Naive thymus-derived CD4-positive, alpha-beta T cell (primary cell): ENCODE measurements at regions of chr1 and their contacts with region 1.

Region 1: DNA sequence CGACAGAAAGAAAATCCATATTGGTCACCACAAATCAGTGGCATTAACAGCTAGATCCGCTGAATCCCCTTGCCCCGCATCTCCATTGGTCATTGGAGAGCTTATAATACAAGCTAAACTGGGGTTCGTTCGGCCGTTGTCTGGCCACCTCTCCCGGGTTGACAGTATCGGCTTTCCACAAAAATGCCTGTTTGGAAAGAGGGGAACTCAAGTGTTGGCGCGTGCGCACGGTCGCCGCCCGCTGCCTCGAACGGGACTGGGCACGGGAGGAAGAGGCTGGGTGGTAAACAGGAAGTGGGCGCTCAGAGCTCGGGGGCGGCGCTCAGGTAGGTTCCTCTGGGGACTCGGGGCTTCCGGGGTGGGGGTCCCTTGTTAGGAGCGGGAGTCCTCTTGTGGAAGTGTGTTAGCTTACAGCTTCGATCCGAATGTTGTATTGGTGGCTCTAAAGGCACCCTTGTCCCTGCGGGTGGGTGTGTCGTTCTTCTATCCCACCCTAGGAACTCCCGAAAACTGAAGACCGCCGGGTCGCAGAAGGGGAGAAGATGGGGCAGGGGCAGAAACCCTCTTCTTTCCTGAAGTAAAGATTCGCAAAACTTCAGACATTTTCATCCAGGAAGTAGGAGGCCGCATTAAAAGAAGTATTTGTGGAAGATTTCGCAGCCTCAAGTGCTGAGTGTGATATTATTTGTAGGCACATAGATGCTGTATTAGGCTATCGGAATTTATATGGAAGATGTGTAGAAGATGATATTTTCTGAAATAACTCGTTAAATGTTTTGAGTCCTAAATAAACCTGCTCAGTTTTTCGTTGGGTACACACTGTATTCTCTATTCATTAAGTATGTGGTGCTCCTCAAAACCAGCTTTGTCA is 962 bp downstream of the BROX start:
- DNase-seq: peak; percentile 76 to 95 (median 93)
- ATAC-seq: peak; percentile 80
- H3K4me3 ChIP-seq: peak overlapping the region; percentile 99
- H3K4me3 Mint-ChIP-seq: peak overlapping the region; percentile 92 to 100 (median 99)
- H3K27ac ChIP-seq: peak overlapping the region; percentile 100
- H3K27ac Mint-ChIP-seq: peak overlapping the region; percentile 97 to 100 (median 99)
- H3K4me1 ChIP-seq: peaks cover 11 to 21% of the 10 kb centered on the region in 2 donors
- H3K4me1 Mint-ChIP-seq: peaks cover 37 to 69% (median 60%) of the 10 kb centered on the region in 7 donors
- H3K27me3 ChIP-seq: no peaks in the 10 kb centered on the region
- H3K27me3 Mint-ChIP-seq: peaks cover 0 to 2% (median 0%) of the 10 kb centered on the region in 5 donors

Region 2: DNA sequence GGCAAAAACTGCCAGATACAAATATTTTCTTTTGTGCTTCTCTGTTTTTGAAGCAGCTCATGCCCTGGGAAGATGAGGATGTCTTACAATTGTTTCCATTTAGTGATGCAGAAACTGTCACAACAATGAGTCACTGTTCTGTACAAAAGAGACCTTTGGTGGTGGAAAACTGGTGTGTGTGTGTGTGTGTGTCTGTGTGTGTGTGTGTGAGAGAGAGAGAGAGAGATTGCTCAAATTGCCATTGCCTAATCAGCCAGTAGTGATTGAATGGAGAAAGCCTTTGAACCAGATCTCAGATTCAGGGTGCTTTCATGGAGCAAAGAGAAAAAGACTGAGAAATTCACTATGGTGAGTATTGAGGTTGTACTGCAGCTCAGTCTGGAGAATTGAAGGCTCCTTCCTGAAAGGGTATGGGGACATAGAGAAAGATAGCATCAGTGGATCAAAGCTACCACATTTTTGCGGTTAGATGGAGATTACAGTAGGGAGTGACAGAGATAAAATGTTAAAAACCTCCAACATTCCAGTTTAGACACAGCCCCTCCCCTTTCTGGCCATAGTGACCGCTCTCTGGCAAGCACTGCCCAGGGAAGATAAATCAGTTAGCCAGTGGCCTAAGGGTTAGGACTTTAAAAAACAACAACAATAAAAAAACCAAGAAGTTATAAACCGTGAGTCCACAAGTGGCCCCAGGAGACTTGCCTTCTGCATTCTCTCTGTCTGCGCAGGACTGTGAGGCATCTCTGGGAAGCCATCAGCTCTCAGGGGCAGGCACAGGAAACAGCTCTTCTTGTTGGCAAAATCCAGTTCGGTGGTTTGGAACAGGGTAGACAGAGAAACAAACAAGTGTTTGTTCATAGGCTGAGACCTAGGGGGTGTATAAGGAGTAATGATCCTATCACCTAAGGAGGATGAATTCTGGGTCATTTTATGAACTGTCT is 1377.9 kb before region 1 on chr1:
- CTCF ChIA-PET with region 1: no interaction called
- POLR2A ChIA-PET with region 1: no interaction called
- intact Hi-C with region 1: no loop called
- DNase-seq: no peak
- ATAC-seq: no peak
- H3K4me3 ChIP-seq: no peak overlapping the region
- H3K4me3 Mint-ChIP-seq: no peak overlapping the region
- H3K27ac ChIP-seq: no peak overlapping the region
- H3K27ac Mint-ChIP-seq: no peak overlapping the region
- H3K4me1 ChIP-seq: no peaks in the 10 kb centered on the region
- H3K4me1 Mint-ChIP-seq: peaks cover 0 to 4% (median 0%) of the 10 kb centered on the region in 7 donors
- H3K27me3 ChIP-seq: no peaks in the 10 kb centered on the region
- H3K27me3 Mint-ChIP-seq: peaks cover 0 to 36% (median 20%) of the 10 kb centered on the region in 5 donors

Region 3: GRCh38 chr1:222465211-222466041 is 247.9 kb before region 1 on chr1:
- CTCF ChIA-PET with region 1: interaction called, 4 read pairs
- POLR2A ChIA-PET with region 1: interaction called, 11 read pairs
- intact Hi-C with region 1: loop called (anchors 1 kb)
- DNase-seq: peak; percentile 57 to 89 (median 84)
- ATAC-seq: peak; percentile 99
- H3K4me3 ChIP-seq: peak overlapping the region; percentile 86
- H3K4me3 Mint-ChIP-seq: peak overlapping the region; percentile 79 to 92 (median 86)
- H3K27ac ChIP-seq: peak overlapping the region; percentile 64
- H3K27ac Mint-ChIP-seq: peak overlapping the region; percentile 80 to 96 (median 90)
- H3K4me1 ChIP-seq: peaks cover 5 to 6% of the 10 kb centered on the region in 2 donors
- H3K4me1 Mint-ChIP-seq: peaks cover 11 to 25% (median 13%) of the 10 kb centered on the region in 7 donors
- H3K27me3 ChIP-seq: no peaks in the 10 kb centered on the region
- H3K27me3 Mint-ChIP-seq: peaks cover 0 to 18% (median 0%) of the 10 kb centered on the region in 5 donors

Region 4: DNA sequence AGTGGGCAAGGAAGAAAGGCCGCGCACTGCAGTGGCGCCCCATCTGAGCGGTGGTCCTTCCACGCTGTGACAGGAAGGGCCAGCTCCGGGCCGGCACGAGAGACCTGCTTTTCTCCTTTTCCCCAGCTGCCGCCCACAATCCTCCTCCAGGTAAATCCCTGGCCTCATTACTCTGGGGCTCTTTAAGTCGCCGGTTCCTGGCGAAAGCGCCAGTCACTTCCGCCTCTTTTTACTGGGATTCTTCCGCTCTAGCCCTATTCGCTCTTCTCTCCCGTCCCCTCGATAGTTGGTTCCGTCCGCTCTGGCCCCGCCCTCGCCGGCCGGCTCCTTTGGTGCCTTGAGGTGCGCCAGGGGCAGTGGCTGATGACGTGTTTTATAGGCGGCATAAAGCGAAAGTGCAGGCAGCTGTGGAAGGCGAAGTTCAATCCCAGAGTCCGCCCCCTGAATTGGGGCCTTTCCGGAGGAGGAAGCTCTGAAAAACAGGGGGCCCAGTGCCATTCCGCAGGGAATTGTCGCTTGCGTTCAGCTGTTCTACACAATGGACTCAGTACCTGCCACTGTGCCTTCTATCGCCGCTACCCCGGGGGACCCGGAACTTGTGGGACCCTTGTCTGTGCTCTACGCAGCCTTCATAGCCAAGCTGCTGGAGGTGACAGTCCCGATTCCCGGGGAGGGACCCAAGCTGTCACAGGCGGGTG is 69.2 kb before region 1 on chr1:
- CTCF ChIA-PET with region 1: interaction called, 6 read pairs
- POLR2A ChIA-PET with region 1: interaction called, 45 read pairs
- intact Hi-C with region 1: loop called (anchors 1 kb)
- DNase-seq: peak; percentile 93 to 98 (median 96)
- ATAC-seq: peak; percentile 97
- H3K4me3 ChIP-seq: peak overlapping the region; percentile 99
- H3K4me3 Mint-ChIP-seq: peak overlapping the region; percentile 87 to 99 (median 97)
- H3K27ac ChIP-seq: peak overlapping the region; percentile 92
- H3K27ac Mint-ChIP-seq: peak overlapping the region; percentile 95 to 99 (median 98)
- H3K4me1 ChIP-seq: peaks cover 12% of the 10 kb centered on the region in 2 donors
- H3K4me1 Mint-ChIP-seq: peaks cover 12 to 59% (median 49%) of the 10 kb centered on the region in 7 donors
- H3K27me3 ChIP-seq: no peaks in the 10 kb centered on the region
- H3K27me3 Mint-ChIP-seq: no peaks in the 10 kb centered on the region

Region 5: GRCh38 chr1:222814536-222815439 is 101.5 kb after region 1 on chr1 and contains the start of gene DISP1:
- CTCF ChIA-PET with region 1: no interaction called
- POLR2A ChIA-PET with region 1: no interaction called
- intact Hi-C with region 1: loop called (anchors 2 to 5 kb)
- DNase-seq: peak; percentile 46 to 71 (median 60)
- ATAC-seq: peak; percentile 90
- H3K4me3 ChIP-seq: peak within 1 kb of the TSS; percentile 77
- H3K4me3 Mint-ChIP-seq: peak within 1 kb of the TSS; percentile 87 to 97 (median 95)
- H3K27ac ChIP-seq: peak within 1 kb of the TSS; percentile 78
- H3K27ac Mint-ChIP-seq: peak within 1 kb of the TSS; percentile 79 to 96 (median 89)
- H3K4me1 ChIP-seq: no peaks in the 10 kb centered on the region
- H3K4me1 Mint-ChIP-seq: peaks cover 17 to 37% (median 29%) of the 10 kb centered on the region in 7 donors
- H3K27me3 ChIP-seq: no peaks in the 10 kb centered on the region
- H3K27me3 Mint-ChIP-seq: peaks cover 0 to 13% (median 0%) of the 10 kb centered on the region in 5 donors
- total RNA-seq, gene DISP1: 1.7 to 4.6 (median 3.0) TPM

Region 6: DNA sequence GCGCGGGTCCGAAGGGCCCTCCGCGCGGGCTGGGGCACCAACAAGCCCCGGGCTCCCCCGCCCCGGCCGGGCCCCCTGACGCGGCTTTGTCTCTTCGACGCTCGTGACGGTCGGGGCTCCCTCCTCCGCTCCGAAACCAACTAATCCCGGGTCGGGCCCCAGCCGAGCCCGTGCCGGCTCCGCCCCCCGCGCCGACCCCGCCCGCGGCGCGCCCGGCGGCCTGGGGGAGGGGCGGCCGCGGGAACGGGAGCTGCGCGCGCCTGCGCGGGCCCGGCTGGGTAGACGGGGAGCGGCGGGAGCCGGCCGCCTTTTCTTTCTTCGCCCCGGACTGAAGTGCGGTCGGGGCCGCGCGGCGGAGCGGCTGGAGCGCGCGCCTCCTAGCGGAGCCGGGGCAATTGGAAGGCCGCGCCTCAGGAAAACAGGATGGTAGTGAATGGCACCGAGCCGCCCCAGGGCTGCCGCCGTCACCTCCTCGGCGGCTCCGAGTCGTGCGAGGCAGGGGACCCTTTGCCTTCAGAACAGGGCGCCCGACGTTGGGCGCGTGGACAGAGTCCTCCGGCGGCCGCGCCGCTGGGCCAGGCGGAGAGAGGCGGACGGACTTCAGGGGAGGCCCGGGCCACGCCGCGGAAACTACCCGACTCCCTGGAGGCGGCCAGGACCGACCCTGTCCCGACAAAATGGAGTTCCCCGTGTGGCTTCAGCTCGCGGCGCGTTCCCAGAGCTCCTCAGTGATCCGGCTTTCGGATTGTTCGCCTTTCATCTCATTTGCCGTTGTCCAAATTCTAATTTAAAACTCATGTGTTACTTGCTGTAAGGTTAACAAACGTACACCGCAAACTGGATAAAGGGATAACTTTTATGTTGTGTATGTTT is 1132.7 kb after region 1 on chr1 and contains the start of gene TP53BP2:
- CTCF ChIA-PET with region 1: no interaction called
- POLR2A ChIA-PET with region 1: interaction called, 7 read pairs
- intact Hi-C with region 1: loop called in 1 of 2 experiments (anchors 1 kb)
- DNase-seq: peak; percentile 86 to 95 (median 90)
- ATAC-seq: peak; percentile 92
- H3K4me3 ChIP-seq: peak within 1 kb of the TSS; percentile 84
- H3K4me3 Mint-ChIP-seq: peak within 1 kb of the TSS; percentile 88 to 99 (median 96)
- H3K27ac ChIP-seq: peak within 1 kb of the TSS; percentile 99
- H3K27ac Mint-ChIP-seq: peak within 1 kb of the TSS; percentile 94 to 99 (median 98)
- H3K4me1 ChIP-seq: peaks cover 14 to 27% of the 10 kb centered on the region in 2 donors
- H3K4me1 Mint-ChIP-seq: peaks cover 23 to 53% (median 40%) of the 10 kb centered on the region in 7 donors
- H3K27me3 ChIP-seq: no peaks in the 10 kb centered on the region
- H3K27me3 Mint-ChIP-seq: peaks cover 0 to 4% (median under 1%) of the 10 kb centered on the region in 5 donors
- total RNA-seq, gene TP53BP2: 30.3 to 120 (median 45.4) TPM

Region 7: GRCh38 chr1:224434691-224435317 is 1721.5 kb after region 1 on chr1 and contains the start of gene WDR26:
- CTCF ChIA-PET with region 1: no interaction called
- POLR2A ChIA-PET with region 1: interaction called, 5 read pairs
- intact Hi-C with region 1: loop called in 1 of 2 experiments (anchors 2 kb)
- DNase-seq: peak; percentile 67 to 91 (median 86)
- ATAC-seq: peak; percentile 90
- H3K4me3 ChIP-seq: peak within 1 kb of the TSS; percentile 93
- H3K4me3 Mint-ChIP-seq: peak within 1 kb of the TSS; percentile 84 to 99 (median 96)
- H3K27ac ChIP-seq: peak within 1 kb of the TSS; percentile 97
- H3K27ac Mint-ChIP-seq: peak within 1 kb of the TSS; percentile 92 to 99 (median 97)
- H3K4me1 ChIP-seq: peaks cover 27 to 30% of the 10 kb centered on the region in 2 donors
- H3K4me1 Mint-ChIP-seq: peaks cover 42 to 63% (median 59%) of the 10 kb centered on the region in 7 donors
- H3K27me3 ChIP-seq: no peaks in the 10 kb centered on the region
- H3K27me3 Mint-ChIP-seq: no peaks in the 10 kb centered on the region
- total RNA-seq, gene WDR26: 80.5 to 164 (median 104) TPM